ENCODE measurements at regions of chr2 and their contacts with region 1.

Region 1: GRCh38 chr2:50401772-50402653 is 629.9 kb downstream of the NRXN1 start:
- DNase-seq: peak; percentile 32
- H3K4me3 ChIP-seq: no peak overlapping the region
- H3K27ac ChIP-seq: no peak overlapping the region
- H3K4me1 ChIP-seq: no peaks in the 10 kb centered on the region
- H3K27me3 ChIP-seq: no peaks in the 10 kb centered on the region
- CTCF ChIP-seq: peak; percentile 89 to 98

Region 2: GRCh38 chr2:48600204-48600813 is 1801.7 kb before region 1 on chr2:
- CTCF ChIA-PET with region 1: no interaction called
- dilution Hi-C with region 1: no loop called
- in situ Hi-C with region 1: no loop called
- intact Hi-C with region 1: loop called (anchors 2 kb)
- DNase-seq: peak; percentile 32
- H3K4me3 ChIP-seq: no peak overlapping the region
- H3K27ac ChIP-seq: no peak overlapping the region
- H3K4me1 ChIP-seq: no peaks in the 10 kb centered on the region
- H3K27me3 ChIP-seq: no peaks in the 10 kb centered on the region
- CTCF ChIP-seq: peak; percentile 69 to 78

Region 3: DNA sequence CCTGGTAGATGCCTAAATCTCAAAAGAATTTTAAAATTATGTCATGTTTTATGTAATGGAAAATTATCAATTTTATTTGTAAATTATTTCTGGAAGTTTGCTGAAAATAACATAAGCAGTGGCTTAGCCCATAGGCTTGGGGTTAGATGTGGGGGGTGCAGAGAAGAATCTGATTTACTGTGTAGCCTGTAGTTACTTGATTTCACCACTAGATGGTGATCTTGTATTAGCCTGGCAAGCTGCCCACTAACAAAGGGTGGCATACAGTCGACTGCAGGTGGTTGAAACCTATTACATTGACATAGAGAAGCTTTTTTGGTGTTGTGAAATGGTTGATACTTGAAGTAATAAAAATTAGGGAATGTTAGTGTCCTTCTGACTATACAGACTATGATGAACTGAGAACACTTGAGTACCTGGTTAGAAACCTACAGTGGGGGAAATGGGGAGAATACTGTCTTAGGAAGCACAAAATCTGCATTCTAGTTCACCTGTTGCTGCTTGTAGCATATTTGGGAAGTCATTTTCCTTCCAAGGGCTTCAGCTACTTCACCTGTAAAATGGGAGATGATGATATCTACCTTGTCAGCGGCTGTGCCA is 1455.5 kb before region 1 on chr2:
- CTCF ChIA-PET with region 1: no interaction called
- dilution Hi-C with region 1: no loop called
- in situ Hi-C with region 1: loop called in 1 of 2 experiments (anchors 25 kb)
- intact Hi-C with region 1: loop called (anchors 1 kb)
- DNase-seq: peak; percentile 30
- H3K4me3 ChIP-seq: no peak overlapping the region
- H3K27ac ChIP-seq: no peak overlapping the region
- H3K4me1 ChIP-seq: no peaks in the 10 kb centered on the region
- H3K27me3 ChIP-seq: no peaks in the 10 kb centered on the region
- CTCF ChIP-seq: peak; percentile 78 to 80

Region 4: DNA sequence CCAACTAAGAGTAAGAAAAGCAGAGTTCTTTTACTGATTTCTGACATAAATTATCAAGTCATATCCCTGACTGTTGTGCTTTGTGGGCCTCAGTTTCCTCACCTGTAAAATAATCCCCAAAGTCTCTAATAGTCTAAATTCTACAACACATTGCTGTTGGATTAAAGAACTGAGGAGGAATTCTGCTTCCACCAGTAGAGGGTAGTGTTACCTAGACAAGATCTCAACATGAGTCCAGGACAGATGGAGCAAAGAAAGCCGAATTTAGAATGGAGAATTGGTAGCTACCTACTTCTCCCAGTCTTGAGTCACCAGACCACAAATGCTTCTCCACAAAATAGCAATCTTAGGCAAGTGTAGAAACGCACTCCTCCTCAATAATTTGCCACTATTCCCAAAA is 785.2 kb before region 1 on chr2:
- CTCF ChIA-PET with region 1: no interaction called
- dilution Hi-C with region 1: no loop called
- in situ Hi-C with region 1: no loop called
- intact Hi-C with region 1: loop called (anchors 2 kb)
- DNase-seq: peak; percentile 16
- H3K4me3 ChIP-seq: no peak overlapping the region
- H3K27ac ChIP-seq: no peak overlapping the region
- H3K4me1 ChIP-seq: no peaks in the 10 kb centered on the region
- H3K27me3 ChIP-seq: no peaks in the 10 kb centered on the region
- CTCF ChIP-seq: peak; percentile 37 to 59

Region 5: DNA sequence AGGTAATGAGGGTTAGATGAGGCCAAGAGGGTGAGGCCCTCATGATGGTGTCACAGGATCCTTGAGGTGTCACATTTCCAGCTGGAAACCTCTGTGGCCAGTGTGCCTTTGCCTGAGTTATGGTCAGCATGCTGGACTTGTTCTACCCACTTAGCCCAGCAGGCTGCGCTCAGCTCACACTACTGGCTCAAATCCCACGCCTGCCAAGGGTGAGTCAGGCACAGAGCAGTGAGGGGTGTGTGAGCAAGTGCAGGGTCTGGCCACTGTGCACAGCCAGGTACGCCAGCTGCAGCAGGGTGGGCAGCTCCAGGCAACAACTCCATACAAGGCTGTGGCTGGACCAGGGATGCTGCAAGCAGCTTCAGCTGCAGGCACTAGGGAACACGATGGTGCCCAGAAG is 631.1 kb before region 1 on chr2:
- CTCF ChIA-PET with region 1: no interaction called
- dilution Hi-C with region 1: no loop called
- in situ Hi-C with region 1: no loop called
- intact Hi-C with region 1: loop called (anchors 1 kb)
- DNase-seq: peak; percentile 31
- H3K4me3 ChIP-seq: no peak overlapping the region
- H3K27ac ChIP-seq: no peak overlapping the region
- H3K4me1 ChIP-seq: no peaks in the 10 kb centered on the region
- H3K27me3 ChIP-seq: no peaks in the 10 kb centered on the region
- CTCF ChIP-seq: peak; percentile 47 to 65

Region 6: GRCh38 chr2:50347358-50348044 is 54.5 kb before region 1 on chr2:
- CTCF ChIA-PET with region 1: interaction called, 17 read pairs
- dilution Hi-C with region 1: loop called (anchors 5 kb)
- in situ Hi-C with region 1: no loop called
- intact Hi-C with region 1: no loop called
- DNase-seq: no peak
- H3K4me3 ChIP-seq: no peak overlapping the region
- H3K27ac ChIP-seq: no peak overlapping the region
- H3K4me1 ChIP-seq: no peaks in the 10 kb centered on the region
- H3K27me3 ChIP-seq: peaks cover 37% of the 10 kb centered on the region
- CTCF ChIP-seq: no peak

Region 7: DNA sequence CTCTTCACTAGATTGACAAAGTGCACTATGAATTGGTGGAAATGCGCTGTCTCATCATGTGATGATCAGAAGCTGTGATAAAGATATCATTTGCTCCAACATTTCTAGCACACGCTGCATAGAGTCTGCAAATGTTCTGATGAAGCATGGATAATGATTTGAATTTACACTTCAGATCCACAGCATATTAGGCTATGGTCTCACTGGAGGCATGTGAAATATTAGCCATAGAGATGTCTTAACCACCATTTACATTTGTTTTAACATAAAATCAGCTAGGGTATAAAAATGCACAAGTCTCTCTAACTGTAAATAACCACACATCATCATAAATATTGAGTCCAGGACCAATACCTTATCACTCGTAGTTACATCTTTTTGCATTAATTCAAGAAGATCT is 13.4 kb after region 1 on chr2:
- CTCF ChIA-PET with region 1: no interaction called
- dilution Hi-C with region 1: no loop called
- in situ Hi-C with region 1: no loop called
- intact Hi-C with region 1: no loop called
- DNase-seq: no peak
- H3K4me3 ChIP-seq: no peak overlapping the region
- H3K27ac ChIP-seq: no peak overlapping the region
- H3K4me1 ChIP-seq: no peaks in the 10 kb centered on the region
- H3K27me3 ChIP-seq: no peaks in the 10 kb centered on the region
- CTCF ChIP-seq: no peak